ENCODE measurements at regions of chr14 and their contacts with region 1.

Region 1: GRCh38 chr14:59534361-59534987 is 42.1 kb downstream of the CCDC175 start:
- DNase-seq: no peak
- H3K4me3 ChIP-seq: no peak overlapping the region
- H3K27ac ChIP-seq: no peak overlapping the region
- H3K4me1 ChIP-seq: no peaks in the 10 kb centered on the region
- H3K27me3 ChIP-seq: no peaks in the 10 kb centered on the region
- CTCF ChIP-seq: no peak

Region 2: DNA sequence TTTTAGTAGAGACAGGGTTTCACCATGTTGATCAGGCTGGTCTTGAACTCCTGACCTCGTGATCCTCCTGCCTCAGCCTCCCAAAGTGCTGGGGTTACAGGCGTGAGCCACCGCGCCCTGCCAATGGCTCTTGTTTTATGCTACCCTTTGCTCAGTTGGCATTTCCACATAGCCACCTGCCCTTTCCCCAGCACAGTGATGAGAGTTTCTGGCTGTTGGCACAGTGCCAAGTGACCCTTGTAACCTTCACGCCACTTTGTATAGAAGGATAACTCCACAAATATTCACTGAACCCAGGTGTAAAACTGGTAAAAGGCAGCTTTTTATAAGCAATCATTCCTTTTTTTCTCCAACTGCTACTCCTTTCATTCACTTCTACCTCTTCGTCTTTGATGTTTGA is 60.6 kb after region 1 on chr14:
- CTCF ChIA-PET with region 1: interaction called, 11 read pairs
- dilution Hi-C with region 1: no loop called
- in situ Hi-C with region 1: no loop called
- intact Hi-C with region 1: no loop called
- DNase-seq: no peak
- H3K4me3 ChIP-seq: no peak overlapping the region
- H3K27ac ChIP-seq: no peak overlapping the region
- H3K4me1 ChIP-seq: no peaks in the 10 kb centered on the region
- H3K27me3 ChIP-seq: no peaks in the 10 kb centered on the region
- CTCF ChIP-seq: no peak